Right ventricle myocardium inferior (tissue), 1 donor: ENCODE measurements at regions of chr17 and their contacts with region 1.

Region 1: GRCh38 chr17:81142301-81143199 is 22.8 kb upstream of the PVALEF start:
- DNase-seq: peak; percentile 91
- ATAC-seq: peak; percentile 92

Region 2: GRCh38 chr17:81200695-81201580 is 58.4 kb after region 1 on chr17:
- intact Hi-C with region 1: loop called (anchors 2 kb)
- DNase-seq: no peak
- ATAC-seq: peak; percentile 41

Region 3: GRCh38 chr17:81238817-81239600 is 96.5 kb after region 1 on chr17 and contains the starts of genes NDUFAF8 and TEPSIN:
- intact Hi-C with region 1: loop called (anchors 1 kb)
- DNase-seq: peak; percentile 98
- ATAC-seq: peak; percentile 98
- total RNA-seq, gene NDUFAF8: 58.0 TPM
- total RNA-seq, gene TEPSIN: 11.1 TPM